Heart right ventricle (tissue), 16 donors: ENCODE measurements at regions of chr1 and their contacts with region 1.

Region 1: GRCh38 chr1:26965640-26966039 is 5.4 kb upstream of the KDF1 start:
- DNase-seq: no peak
- ATAC-seq: no peak
- H3K4me3 ChIP-seq: no peak overlapping the region
- H3K27ac ChIP-seq: no peak overlapping the region
- H3K4me1 ChIP-seq: no peaks in the 10 kb centered on the region
- H3K27me3 ChIP-seq: peaks cover 0 to 55% (median 20%) of the 10 kb centered on the region in 7 donors
- CTCF ChIP-seq: no peak

Region 2: DNA sequence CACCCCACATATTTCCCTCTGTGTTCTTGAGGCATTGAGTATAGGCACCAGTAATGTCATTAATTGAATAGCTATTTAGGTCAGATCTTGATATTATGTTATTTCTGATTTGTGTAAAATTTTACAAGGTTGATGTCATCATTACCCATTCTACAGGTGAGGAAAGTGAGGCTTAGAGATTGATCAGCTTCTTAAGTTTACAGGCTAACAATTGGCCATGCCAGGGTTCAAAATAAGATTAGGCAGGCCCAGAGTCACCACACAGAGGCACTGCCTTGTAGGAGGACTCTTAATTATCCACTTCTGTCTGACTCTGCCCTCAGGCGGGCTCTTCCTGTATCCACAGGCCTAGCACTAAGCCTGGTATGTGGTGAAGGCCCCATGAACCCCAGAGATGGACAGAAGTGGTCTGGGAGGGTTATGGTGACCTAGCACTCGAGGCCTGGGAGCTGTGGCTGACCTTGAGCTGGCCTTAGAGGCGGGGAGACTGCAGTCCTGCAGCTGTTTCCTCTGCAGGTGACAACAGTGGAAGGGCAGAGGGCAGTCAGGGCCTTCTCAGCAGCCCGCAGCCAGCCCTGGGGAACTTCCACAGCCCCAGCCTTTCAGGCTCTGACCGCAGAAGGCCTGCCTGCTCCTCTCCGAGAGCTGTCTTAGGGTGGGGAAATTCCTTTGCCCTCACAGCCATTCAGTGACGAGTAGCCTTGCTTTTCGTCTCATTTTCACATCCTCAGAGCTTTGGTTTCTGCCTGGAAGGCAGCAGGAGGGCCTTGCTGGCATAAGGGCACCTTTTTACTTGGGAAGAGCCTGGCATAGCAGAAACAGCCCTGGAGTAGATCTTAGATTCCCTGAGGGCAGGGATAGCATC is 126.9 kb before region 1 on chr1:
- intact Hi-C with region 1: no loop called
- DNase-seq: no peak
- ATAC-seq: peak in 4 of 8 donors; percentile 21 to 53 (median 26)
- H3K4me3 ChIP-seq: no peak overlapping the region
- H3K27ac ChIP-seq: peak overlapping the region in 1 of 10 donors; percentile 39
- H3K4me1 ChIP-seq: peaks cover 0 to 21% (median 0%) of the 10 kb centered on the region in 9 donors
- H3K27me3 ChIP-seq: no peaks in the 10 kb centered on the region
- CTCF ChIP-seq: no peak

Region 3: DNA sequence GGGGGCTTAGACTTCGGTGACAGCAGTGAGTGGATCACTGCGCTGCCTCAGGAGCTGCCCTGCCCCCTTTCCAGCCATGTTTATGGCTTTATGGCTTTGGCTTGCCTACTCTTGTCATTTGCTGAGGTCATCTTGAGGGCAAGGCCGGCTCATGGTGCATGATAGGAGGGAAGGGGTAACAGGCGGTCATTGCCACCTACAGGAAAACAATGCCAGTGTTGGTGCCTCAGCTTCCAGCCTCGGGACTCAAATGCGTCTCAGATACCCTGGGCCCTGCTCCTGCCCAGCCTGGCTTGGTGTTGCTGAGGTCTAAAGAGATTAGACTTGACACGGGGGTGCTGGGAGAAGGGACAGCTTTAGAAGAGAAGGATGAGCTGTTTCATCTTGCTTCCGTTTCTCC is 19.9 kb before region 1 on chr1:
- intact Hi-C with region 1: loop called in 1 of 10 experiments (anchors 2 kb)
- DNase-seq: peak; percentile 21 to 29
- ATAC-seq: peak; percentile 38 to 66 (median 50)
- H3K4me3 ChIP-seq: no peak overlapping the region
- H3K27ac ChIP-seq: peak overlapping the region in 7 of 10 donors; percentile 47 to 81 (median 68)
- H3K4me1 ChIP-seq: peaks cover 0 to 50% (median 21%) of the 10 kb centered on the region in 9 donors
- H3K27me3 ChIP-seq: no peaks in the 10 kb centered on the region
- CTCF ChIP-seq: no peak